Upper lobe of right lung (tissue), 1 donor: ENCODE measurements at regions of chr2 and their contacts with region 1.

Region 1: GRCh38 chr2:111897924-111898702 is at the start of gene MERTK:
- DNase-seq: peak; percentile 94
- ATAC-seq: peak; percentile 91
- H3K4me3 ChIP-seq: peak within 1 kb of the TSS; percentile 94
- H3K27ac ChIP-seq: peak within 1 kb of the TSS; percentile 89
- H3K4me1 ChIP-seq: peaks cover 27% of the 10 kb centered on the region
- H3K27me3 ChIP-seq: no peaks in the 10 kb centered on the region
- CTCF ChIP-seq: peak; percentile 64
- total RNA-seq, gene MERTK: 17.3 TPM

Region 2: DNA sequence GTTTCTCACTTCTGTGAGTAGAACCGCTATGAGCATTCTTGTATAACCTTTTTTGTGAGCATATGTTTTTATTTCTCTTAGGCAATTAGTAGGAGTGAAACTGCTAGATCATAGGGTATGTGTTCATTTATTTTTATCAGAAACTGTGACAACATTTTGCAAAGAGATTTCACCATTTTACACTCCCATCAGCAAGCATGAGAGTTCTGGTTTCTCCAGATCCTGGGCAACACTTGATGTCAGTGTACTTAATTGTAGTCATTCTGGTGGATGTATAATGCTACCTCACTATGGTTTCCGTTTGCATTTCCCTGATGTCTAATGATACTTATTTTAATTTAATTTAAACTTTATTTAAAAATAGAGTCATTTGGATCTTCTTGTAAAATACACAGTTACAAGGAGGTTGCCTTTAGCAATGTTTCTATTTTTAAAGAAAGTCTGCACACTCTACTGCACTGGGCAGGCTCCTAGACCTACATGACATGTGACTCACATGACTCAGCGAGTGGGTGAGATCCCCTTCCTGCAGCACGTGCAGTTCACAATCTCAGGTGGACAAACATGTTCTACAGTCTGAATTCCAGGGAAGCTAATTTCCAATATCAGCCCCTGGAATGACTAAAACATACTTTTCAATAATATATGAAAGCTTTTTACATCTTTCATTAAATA is 904.4 kb before region 1 on chr2:
- intact Hi-C with region 1: no loop called
- DNase-seq: no peak
- ATAC-seq: peak; percentile 91
- H3K4me3 ChIP-seq: no peak overlapping the region
- H3K27ac ChIP-seq: peak overlapping the region; percentile 24
- H3K4me1 ChIP-seq: peaks cover 16% of the 10 kb centered on the region
- H3K27me3 ChIP-seq: no peaks in the 10 kb centered on the region
- CTCF ChIP-seq: no peak

Region 3: GRCh38 chr2:111705711-111706336 is 192.3 kb before region 1 on chr2:
- intact Hi-C with region 1: no loop called
- DNase-seq: no peak
- ATAC-seq: no peak
- H3K4me3 ChIP-seq: no peak overlapping the region
- H3K27ac ChIP-seq: no peak overlapping the region
- H3K4me1 ChIP-seq: peaks cover 18% of the 10 kb centered on the region
- H3K27me3 ChIP-seq: no peaks in the 10 kb centered on the region
- CTCF ChIP-seq: no peak

Region 4: DNA sequence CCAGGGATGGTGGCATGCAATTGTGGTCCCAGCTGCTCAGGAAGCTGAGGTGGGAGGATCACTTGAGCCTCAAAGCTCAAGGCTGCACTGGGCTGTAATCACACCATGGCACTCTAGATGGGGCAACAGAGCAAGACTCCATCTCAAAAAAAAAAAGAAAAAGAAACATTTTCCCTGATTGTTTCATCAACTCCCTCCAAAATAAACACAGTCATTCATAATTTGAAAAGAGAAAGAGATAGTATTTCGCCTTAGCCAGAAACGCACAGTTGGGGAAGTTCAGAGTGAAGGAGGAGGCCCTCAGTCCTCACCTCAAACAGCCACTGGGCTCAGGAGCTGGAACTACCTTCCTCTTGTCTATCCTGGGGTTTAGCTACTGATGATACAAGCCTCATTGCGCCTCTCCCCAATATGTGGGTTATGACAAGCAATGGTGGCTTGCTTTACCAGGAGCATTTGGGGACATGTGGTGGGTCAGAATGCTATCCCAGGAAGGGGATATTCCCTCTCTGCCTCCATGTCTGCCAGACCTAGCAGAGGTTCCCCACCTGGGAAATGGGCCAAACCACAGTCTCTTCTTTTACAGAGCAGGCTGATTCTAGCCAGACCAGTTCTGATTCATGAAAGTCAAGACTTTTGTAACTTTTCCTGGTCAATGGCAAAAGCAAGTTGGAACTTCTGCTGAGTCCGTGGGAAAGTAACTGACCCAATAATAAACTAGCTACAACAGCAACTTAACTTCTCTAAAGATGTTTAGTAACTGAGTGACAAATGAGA is 134.8 kb after region 1 on chr2:
- intact Hi-C with region 1: no loop called
- DNase-seq: no peak
- ATAC-seq: peak; percentile 63
- H3K4me3 ChIP-seq: no peak overlapping the region
- H3K27ac ChIP-seq: peak overlapping the region; percentile 72
- H3K4me1 ChIP-seq: peaks cover 25% of the 10 kb centered on the region
- H3K27me3 ChIP-seq: no peaks in the 10 kb centered on the region
- CTCF ChIP-seq: peak; percentile 31

Region 5: GRCh38 chr2:112048887-112049286 is 150.8 kb after region 1 on chr2:
- intact Hi-C with region 1: loop called (anchors 5 kb)
- DNase-seq: no peak
- ATAC-seq: peak; percentile 77
- H3K4me3 ChIP-seq: no peak overlapping the region
- H3K27ac ChIP-seq: no peak overlapping the region
- H3K4me1 ChIP-seq: peaks cover 17% of the 10 kb centered on the region
- H3K27me3 ChIP-seq: no peaks in the 10 kb centered on the region
- CTCF ChIP-seq: peak; percentile 91

Region 6: DNA sequence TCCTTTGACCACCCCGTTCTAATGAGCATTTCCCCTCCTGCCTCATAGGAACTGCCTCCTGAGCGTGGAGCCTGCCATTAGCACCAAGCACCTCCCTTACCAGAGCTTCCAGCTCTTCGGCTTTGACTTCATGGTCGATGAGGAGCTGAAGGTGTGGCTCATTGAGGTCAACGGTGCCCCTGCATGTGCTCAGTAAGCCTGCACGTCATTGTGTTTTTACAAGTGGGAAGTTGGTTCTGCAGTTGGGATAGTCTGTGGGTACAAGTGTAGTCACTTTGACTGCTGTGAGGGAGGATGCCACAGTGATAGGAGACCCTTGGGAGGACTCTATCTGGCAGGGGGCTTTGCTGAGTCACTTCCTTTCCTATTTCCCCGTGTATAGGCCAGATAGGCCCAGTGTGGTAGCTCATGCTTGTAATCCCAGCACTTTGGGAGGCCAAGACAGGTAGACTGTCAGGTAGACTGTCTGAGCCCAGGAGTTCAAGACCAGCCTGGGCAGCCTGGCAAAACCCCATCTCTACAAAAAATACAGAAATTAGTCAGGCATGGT is 622.2 kb after region 1 on chr2:
- intact Hi-C with region 1: loop called (anchors 5 kb)
- DNase-seq: no peak
- ATAC-seq: no peak
- H3K4me3 ChIP-seq: no peak overlapping the region
- H3K27ac ChIP-seq: no peak overlapping the region
- H3K4me1 ChIP-seq: no peaks in the 10 kb centered on the region
- H3K27me3 ChIP-seq: no peaks in the 10 kb centered on the region
- CTCF ChIP-seq: no peak